ENCODE measurements at regions of chr1 and their contacts with region 1.

Region 1: GRCh38 chr1:47432071-47433036 is 5.5 kb upstream of the FOXD2 start:
- DNase-seq: peak; percentile 84 to 95 (median 88)
- ATAC-seq: peak; percentile 75
- H3K4me3 ChIP-seq: no peak overlapping the region
- H3K4me1 ChIP-seq: peaks cover 12% of the 10 kb centered on the region
- CTCF ChIP-seq: peak; percentile 52

Region 2: GRCh38 chr1:46132529-46133180 is 1299.7 kb before region 1 on chr1 and contains the start of gene PIK3R3:
- intact Hi-C with region 1: no loop called
- DNase-seq: peak; percentile 95 to 98 (median 98)
- ATAC-seq: peak; percentile 98
- H3K4me3 ChIP-seq: peak within 1 kb of the TSS; percentile 24
- H3K4me1 ChIP-seq: peaks cover 5% of the 10 kb centered on the region
- CTCF ChIP-seq: no peak
- total RNA-seq, gene PIK3R3: 5.9 to 15.6 (median 10.6) TPM

Region 3: GRCh38 chr1:47175227-47175934 is 257.0 kb before region 1 on chr1:
- intact Hi-C with region 1: no loop called
- DNase-seq: peak in 1 of 3 donors; percentile 73
- ATAC-seq: peak; percentile 50
- H3K4me3 ChIP-seq: no peak overlapping the region
- H3K4me1 ChIP-seq: peaks cover 10% of the 10 kb centered on the region
- CTCF ChIP-seq: peak; percentile 89

Region 4: DNA sequence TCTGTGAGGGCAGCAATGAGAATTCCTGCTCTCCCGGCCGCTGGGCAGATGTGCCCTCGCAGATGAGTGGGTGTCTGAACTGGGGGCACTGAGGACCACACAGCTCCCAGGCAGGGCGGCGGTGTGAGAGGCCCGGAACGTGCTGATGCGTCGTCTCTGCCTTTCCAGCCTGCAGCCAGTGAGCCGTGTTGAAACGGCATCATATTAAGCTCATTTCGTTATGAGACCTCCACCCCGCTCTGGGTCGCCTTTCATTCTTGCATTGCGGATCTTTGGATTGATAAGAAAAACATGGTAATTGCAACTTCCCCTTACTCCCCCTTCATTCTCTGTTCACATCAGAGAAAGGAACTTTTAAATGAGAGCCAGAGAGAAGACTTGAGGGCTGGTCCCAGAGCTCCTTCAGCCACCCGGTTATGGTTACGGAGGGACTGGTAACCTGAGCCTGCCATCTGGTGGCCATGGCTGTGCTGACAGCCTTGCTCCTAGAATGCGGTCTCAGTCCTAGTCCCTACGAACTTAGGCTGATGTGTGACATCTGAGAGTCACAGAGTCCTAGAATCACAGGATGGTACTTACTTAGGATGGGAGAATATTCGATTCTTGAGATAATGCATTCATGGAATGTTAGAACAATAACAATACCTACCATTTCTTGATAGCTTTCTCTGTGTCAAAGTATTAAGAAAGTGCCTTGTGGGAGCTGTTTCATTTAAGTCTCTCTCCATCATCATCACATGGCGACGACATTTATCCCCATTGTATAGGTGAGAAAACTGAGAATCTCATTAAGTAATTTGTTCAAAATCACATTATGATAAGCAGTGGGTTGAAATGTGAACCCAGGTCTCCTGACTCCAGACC is 293.9 kb after region 1 on chr1:
- intact Hi-C with region 1: loop called in 1 of 2 experiments (anchors 2 kb)
- DNase-seq: peak; percentile 85 to 95 (median 92)
- ATAC-seq: peak; percentile 67
- H3K4me3 ChIP-seq: no peak overlapping the region
- H3K4me1 ChIP-seq: peaks cover 36% of the 10 kb centered on the region
- CTCF ChIP-seq: peak; percentile 80

Measured in mucosa of descending colon (tissue), 3 donors.